HepG2 (cell line): ENCODE measurements at regions of chr12 and their contacts with region 1.

Region 1: DNA sequence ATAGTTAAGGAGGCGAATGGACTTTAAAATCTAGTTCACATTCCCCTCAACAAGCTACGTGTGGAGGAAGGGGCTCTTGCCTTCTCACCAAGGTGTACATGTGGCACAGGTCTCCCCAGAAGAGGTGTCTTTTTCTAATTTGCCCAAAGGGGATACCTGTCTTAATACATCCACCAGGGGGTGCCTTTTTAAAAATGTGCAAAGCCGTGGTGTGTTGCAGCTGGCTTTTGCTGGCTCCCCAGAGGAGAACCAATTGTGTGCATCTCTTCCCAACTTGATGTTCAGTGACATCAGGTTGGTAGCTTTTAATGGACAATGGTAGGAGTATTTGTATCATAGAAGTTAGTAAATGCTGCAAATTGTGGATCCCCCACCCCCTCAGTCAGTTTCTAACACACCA is 33.8 kb downstream of the CREBL2 start:
- DNase-seq: peak; percentile 64
- ATAC-seq: peak; percentile 91
- H3K4me3 ChIP-seq: no peak overlapping the region
- H3K27ac ChIP-seq: no peak overlapping the region
- H3K4me1 ChIP-seq: no peaks in the 10 kb centered on the region
- H3K27me3 ChIP-seq: no peaks in the 10 kb centered on the region
- CTCF ChIP-seq: peak; percentile 59
- EP300 ChIP-seq: no peak
- POLR2A ChIP-seq: no peak
- RAD21 ChIP-seq: peak; percentile 59

Region 2: GRCh38 chr12:12415886-12416285 is 229.6 kb before region 1 on chr12:
- CTCF ChIA-PET with region 1: no interaction called
- POLR2A ChIA-PET with region 1: no interaction called
- in situ Hi-C with region 1: no loop called
- intact Hi-C with region 1: no loop called
- DNase-seq: no peak
- ATAC-seq: no peak
- H3K4me3 ChIP-seq: no peak overlapping the region
- H3K27ac ChIP-seq: no peak overlapping the region
- H3K4me1 ChIP-seq: peaks cover 27% of the 10 kb centered on the region; the same call in 1 of the 2 replicates
- H3K27me3 ChIP-seq: no peaks in the 10 kb centered on the region
- CTCF ChIP-seq: no peak
- EP300 ChIP-seq: no peak
- POLR2A ChIP-seq: no peak
- RAD21 ChIP-seq: no peak

Region 3: DNA sequence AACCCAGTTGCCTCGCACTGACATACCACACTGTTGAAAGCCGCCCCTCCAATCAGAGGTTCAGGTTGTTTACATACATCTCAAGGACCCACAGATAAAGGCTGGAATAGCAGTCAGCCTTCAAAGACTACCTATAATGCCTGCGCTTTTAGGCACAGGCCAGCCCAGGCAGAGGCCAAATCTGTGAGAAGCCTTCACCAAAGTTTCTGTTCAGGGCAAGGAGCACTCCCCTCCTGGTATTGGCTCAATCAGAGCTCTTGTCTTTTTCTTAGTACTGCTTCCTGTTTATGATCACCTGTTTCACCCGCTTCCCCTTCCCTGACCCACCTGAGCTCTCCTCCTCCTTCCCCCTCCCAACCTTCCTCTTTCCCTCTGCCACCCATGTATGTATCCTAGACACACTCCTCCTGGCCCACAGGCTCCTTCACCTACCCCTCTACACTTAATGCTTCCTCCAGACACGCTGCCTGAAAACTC is 117.6 kb before region 1 on chr12:
- CTCF ChIA-PET with region 1: no interaction called
- POLR2A ChIA-PET with region 1: no interaction called
- in situ Hi-C with region 1: no loop called
- intact Hi-C with region 1: no loop called
- DNase-seq: no peak
- ATAC-seq: peak; percentile 56; the same call in 2 of the 3 replicates
- H3K4me3 ChIP-seq: no peak overlapping the region
- H3K27ac ChIP-seq: peak overlapping the region; percentile 22
- H3K4me1 ChIP-seq: peaks cover 69% of the 10 kb centered on the region
- H3K27me3 ChIP-seq: no peaks in the 10 kb centered on the region
- CTCF ChIP-seq: no peak
- EP300 ChIP-seq: no peak
- POLR2A ChIP-seq: no peak; a peak in 1 of 4 replicates
- RAD21 ChIP-seq: no peak

Region 4: DNA sequence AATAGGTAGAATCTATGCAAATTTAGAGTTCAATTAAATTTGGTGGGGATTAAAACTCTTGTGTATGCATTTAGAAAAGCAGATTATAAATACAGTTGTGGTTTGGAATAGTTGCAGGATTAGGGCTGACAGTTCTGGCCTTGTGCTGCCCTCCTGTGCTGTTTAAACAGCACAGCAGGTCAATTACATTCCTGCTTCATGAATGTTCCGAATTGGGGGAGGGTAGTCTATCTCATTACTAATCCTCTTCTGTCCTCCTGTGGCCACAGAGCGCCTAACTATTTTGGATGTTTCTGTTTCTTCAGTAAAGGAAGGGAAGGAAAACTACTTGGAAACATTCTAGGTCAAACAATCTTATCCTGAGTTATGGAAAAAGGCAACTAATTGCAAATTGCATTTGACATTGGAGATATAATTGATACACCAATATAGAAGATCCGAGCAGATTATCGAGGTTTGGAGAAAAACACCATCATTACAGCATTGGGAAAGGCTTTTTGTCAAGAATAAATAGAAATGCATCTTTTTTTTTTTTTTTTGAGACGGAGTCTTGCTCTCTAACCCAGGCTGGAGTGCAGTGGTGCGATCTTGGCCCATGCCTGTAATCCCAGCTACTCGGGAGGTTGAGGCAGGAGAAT is 59.2 kb after region 1 on chr12:
- CTCF ChIA-PET with region 1: interaction called, 28 read pairs
- POLR2A ChIA-PET with region 1: no interaction called
- in situ Hi-C with region 1: loop called (anchors 10 kb)
- intact Hi-C with region 1: loop called (anchors 1 kb)
- DNase-seq: peak; percentile 92
- ATAC-seq: peak; percentile 99
- H3K4me3 ChIP-seq: peak overlapping the region in 1 of 3 experiments; percentile 6; a peak in 1 of 6 replicates
- H3K27ac ChIP-seq: no peak overlapping the region
- H3K4me1 ChIP-seq: peaks cover 25% of the 10 kb centered on the region
- H3K27me3 ChIP-seq: no peaks in the 10 kb centered on the region; a peak in 1 of 5 replicates
- CTCF ChIP-seq: peak; percentile 92
- EP300 ChIP-seq: no peak; a peak in 1 of 4 replicates
- POLR2A ChIP-seq: no peak
- RAD21 ChIP-seq: peak; percentile 98